ENCODE measurements at regions of chr6 and their contacts with region 1.

Region 1: DNA sequence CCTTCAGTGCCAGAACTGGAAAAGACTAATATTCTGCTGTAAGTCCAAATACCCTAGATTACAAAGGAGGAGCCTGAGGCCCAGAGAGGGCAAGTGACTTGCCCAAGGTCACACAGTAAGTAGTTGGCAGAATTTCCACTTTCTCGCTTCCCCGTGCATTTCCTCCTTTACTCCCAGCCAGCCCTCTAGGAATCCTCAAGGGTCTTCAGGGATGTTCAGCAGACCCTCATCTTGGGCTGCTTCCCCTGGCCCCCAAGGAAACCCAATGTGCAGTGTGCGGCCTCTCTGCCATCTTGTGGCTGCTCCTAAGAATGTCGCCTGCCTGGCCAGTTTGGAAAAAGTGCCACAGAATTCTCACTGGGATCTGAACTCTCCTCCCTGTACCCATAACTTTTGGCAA is 217.7 kb upstream of the LRFN2 start:
- DNase-seq: peak; percentile 48
- H3K4me3 ChIP-seq: no peak overlapping the region; a peak in 1 of 4 replicates
- H3K27ac ChIP-seq: no peak overlapping the region
- H3K4me1 ChIP-seq: peaks cover 3 to 18% of the 10 kb centered on the region in 2 experiments; a peak in 3 of 4 replicates
- H3K27me3 ChIP-seq: no peaks in the 10 kb centered on the region
- CTCF ChIP-seq: peak; percentile 49
- EP300 ChIP-seq: no peak
- RAD21 ChIP-seq: peak; percentile 79

Region 2: DNA sequence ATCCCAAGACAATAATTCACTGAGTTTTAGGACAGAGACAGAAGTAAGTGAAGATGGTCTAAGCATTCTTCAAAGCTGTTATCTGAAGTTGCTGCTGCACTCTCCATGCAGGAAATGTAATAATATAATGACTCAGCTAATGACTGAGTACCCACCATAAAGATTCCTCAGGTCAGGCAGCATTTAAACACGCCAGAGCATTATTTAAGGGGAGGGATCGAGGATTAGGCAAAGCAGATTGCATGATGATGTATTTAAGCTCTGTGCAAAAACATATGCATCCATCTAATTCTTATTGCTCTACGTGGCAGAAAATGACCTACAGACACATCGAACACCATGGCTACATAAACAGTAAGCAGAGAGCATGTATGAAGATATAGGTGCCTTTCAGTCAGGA is 17.7 kb after region 1 on chr6:
- CTCF ChIA-PET with region 1: interaction called, 11 read pairs
- POLR2A ChIA-PET with region 1: no interaction called
- DNase-seq: no peak
- H3K4me3 ChIP-seq: no peak overlapping the region
- H3K27ac ChIP-seq: no peak overlapping the region
- H3K4me1 ChIP-seq: peaks cover 0 to 15% of the 10 kb centered on the region in 2 experiments; a peak in 1 of 4 replicates
- H3K27me3 ChIP-seq: no peaks in the 10 kb centered on the region; the same call in 1 of the 2 replicates
- CTCF ChIP-seq: no peak
- EP300 ChIP-seq: no peak
- RAD21 ChIP-seq: no peak